ENCODE measurements at regions of chr11 and their contacts with region 1.

Region 1: DNA sequence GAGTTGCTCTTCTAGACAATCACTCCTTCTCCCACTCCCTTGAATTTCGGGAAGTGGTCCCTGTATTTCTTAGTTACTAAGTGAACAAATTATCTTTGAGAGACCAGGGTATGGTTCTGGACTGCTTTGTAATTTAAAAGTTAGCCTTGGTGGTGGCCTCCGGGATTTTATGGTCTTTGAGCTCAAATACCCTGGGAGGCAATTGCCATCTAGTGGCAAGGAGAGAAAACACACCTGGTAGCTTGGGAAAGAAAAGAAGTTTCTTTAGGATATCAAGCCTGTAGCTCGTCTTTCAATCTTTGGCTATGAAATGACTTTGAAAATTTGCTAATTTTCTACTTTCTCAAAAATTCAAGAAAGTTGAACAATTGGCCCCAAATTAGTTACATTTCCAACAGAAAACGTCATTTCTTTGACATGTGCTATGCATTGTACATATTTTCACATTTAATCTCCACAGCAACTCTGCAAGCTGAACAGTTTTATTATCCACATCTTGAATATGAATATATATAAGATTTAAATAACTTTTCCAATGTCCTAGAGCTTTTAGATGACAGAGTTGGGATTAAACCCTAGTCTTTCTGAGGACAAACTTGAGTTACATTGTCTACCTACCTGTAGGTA is 39.1 kb downstream of the MMP27 start:
- DNase-seq: peak; percentile 50
- H3K4me3 ChIP-seq: no peak overlapping the region
- H3K27ac ChIP-seq: no peak overlapping the region
- H3K4me1 ChIP-seq: no peaks in the 10 kb centered on the region
- H3K27me3 ChIP-seq: no peaks in the 10 kb centered on the region
- CTCF ChIP-seq: peak; percentile 64 to 76
- POLR2A ChIP-seq: no peak

Region 2: DNA sequence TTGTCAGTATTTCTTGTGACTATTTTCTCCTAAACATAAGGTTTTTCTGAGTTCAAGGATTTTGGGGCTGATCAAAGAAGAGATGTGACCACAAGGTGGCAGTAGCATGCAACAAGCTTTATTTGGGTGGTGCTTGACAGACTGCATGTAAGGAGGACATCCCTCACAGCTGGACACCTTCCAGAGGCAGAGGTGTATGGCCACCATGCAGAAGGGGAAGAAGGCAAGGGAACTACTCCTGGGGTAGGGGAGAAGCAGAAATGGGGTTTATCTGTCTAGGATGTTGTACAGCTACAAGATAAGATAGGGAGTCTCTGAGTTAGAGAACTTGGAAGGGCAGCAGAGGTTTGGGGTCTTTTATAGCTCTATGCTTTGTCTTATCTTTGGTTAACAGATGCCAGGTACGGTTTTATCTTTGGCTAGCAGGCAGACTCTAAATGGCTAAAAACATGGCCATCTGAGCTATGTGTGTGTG is 324.6 kb before region 1 on chr11:
- CTCF ChIA-PET with region 1: interaction called, 113 read pairs
- POLR2A ChIA-PET with region 1: no interaction called
- dilution Hi-C with region 1: no loop called
- intact Hi-C with region 1: loop called (anchors 1 kb)
- DNase-seq: peak; percentile 86
- H3K4me3 ChIP-seq: no peak overlapping the region
- H3K27ac ChIP-seq: no peak overlapping the region
- H3K4me1 ChIP-seq: peaks cover 24% of the 10 kb centered on the region
- H3K27me3 ChIP-seq: no peaks in the 10 kb centered on the region
- CTCF ChIP-seq: peak; percentile 73 to 74
- POLR2A ChIP-seq: no peak

Region 3: GRCh38 chr11:102495161-102496042 is 171.0 kb before region 1 on chr11:
- CTCF ChIA-PET with region 1: interaction called, 46 read pairs
- POLR2A ChIA-PET with region 1: no interaction called
- dilution Hi-C with region 1: no loop called
- intact Hi-C with region 1: loop called (anchors 1 kb)
- DNase-seq: peak; percentile 77
- H3K4me3 ChIP-seq: no peak overlapping the region
- H3K27ac ChIP-seq: no peak overlapping the region
- H3K4me1 ChIP-seq: peaks cover 13% of the 10 kb centered on the region
- H3K27me3 ChIP-seq: no peaks in the 10 kb centered on the region
- CTCF ChIP-seq: peak; percentile 30 to 51
- POLR2A ChIP-seq: no peak

Region 4: GRCh38 chr11:102599642-102600261 is 66.7 kb before region 1 on chr11:
- CTCF ChIA-PET with region 1: interaction called, 70 read pairs
- POLR2A ChIA-PET with region 1: no interaction called
- dilution Hi-C with region 1: no loop called
- intact Hi-C with region 1: no loop called
- DNase-seq: peak; percentile 94
- H3K4me3 ChIP-seq: peak overlapping the region in 1 of 3 experiments; percentile 40
- H3K27ac ChIP-seq: peak overlapping the region; percentile 95
- H3K4me1 ChIP-seq: peaks cover 29% of the 10 kb centered on the region
- H3K27me3 ChIP-seq: no peaks in the 10 kb centered on the region
- CTCF ChIP-seq: no peak
- POLR2A ChIP-seq: peak; percentile 28

Region 5: DNA sequence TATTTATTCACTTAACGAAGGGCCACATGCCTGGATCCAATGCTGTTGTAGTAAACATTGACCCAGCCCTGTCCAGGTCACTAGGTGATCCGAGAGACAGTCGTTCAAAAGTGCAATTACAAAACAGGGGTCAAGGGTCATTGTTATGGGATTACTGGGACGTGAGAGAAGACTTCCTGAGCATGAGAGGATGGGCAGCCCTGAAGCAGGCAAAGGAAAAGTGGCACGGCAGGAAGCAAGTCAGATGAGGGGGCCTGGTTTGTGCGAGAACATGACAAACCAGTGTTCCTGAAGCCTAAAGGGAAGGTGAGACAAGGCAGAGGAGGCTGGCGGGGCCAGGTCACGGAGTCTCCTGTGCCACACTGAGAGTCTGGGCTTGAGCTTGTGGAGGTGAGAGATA is 25.5 kb before region 1 on chr11:
- CTCF ChIA-PET with region 1: interaction called, 14 read pairs
- POLR2A ChIA-PET with region 1: no interaction called
- dilution Hi-C with region 1: no loop called
- intact Hi-C with region 1: no loop called
- DNase-seq: no peak
- H3K4me3 ChIP-seq: no peak overlapping the region
- H3K27ac ChIP-seq: no peak overlapping the region
- H3K4me1 ChIP-seq: no peaks in the 10 kb centered on the region
- H3K27me3 ChIP-seq: no peaks in the 10 kb centered on the region
- CTCF ChIP-seq: no peak
- POLR2A ChIP-seq: no peak

Region 6: DNA sequence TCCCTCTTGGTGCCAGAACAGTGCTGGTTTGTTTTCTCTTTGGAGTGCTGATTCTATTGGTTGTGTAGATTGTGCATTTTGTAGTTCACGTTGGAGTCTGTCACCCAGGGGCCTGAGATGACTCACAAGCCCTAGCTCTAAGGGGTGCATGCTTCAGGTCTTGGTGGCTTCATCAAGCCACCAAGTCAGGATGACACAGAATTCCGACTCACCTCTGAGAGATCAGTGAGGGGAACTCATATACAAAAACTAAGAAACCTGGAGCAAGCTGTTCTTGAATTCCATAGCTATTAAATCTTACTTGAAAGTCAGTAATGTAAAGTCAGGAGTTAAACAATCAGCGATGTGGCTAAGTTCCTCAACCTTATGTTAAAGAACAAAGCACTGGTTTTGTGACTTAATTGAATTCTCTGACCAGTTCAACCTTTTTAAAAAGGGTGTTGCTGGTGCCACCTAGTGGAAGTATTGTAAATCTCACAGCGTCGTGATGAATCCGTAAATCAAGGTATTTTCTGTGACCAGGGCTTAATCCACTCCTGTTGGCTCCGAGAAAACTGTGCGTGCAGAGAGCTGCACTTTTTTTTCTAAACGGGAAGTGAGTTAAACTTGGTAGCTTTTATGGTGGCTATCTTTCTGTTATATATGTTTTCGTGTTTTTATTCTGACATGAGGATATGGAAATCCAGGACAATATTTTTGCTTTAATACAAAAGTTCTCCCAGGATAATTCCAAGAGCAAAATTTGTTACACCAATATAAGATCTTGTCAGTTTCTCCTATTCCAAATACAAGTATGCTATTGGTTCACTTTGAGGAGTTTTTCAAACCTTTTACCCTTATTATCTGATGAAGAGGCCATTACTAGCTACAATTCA is 274.5 kb after region 1 on chr11:
- CTCF ChIA-PET with region 1: interaction called, 5 read pairs
- POLR2A ChIA-PET with region 1: no interaction called
- dilution Hi-C with region 1: no loop called
- intact Hi-C with region 1: loop called (anchors 2 kb)
- DNase-seq: peak; percentile 79
- H3K4me3 ChIP-seq: no peak overlapping the region
- H3K27ac ChIP-seq: no peak overlapping the region
- H3K4me1 ChIP-seq: no peaks in the 10 kb centered on the region
- H3K27me3 ChIP-seq: no peaks in the 10 kb centered on the region
- CTCF ChIP-seq: peak; percentile 65 to 67
- POLR2A ChIP-seq: no peak

Measured in endothelial cell of umbilical vein (primary cell).